ENCODE measurements at regions of chr17 and their contacts with region 1.

Region 1: GRCh38 chr17:79517827-79518584 is 92.8 kb downstream of the RBFOX3 start:
- DNase-seq: no peak
- ATAC-seq: no peak
- H3K4me3 ChIP-seq: no peak overlapping the region
- H3K27ac ChIP-seq: no peak overlapping the region
- H3K4me1 ChIP-seq: no peaks in the 10 kb centered on the region
- H3K27me3 ChIP-seq: peaks cover 33 to 87% of the 10 kb centered on the region in 2 experiments
- CTCF ChIP-seq: no peak
- EP300 ChIP-seq: no peak
- POLR2A ChIP-seq: no peak
- RAD21 ChIP-seq: no peak

Region 2: DNA sequence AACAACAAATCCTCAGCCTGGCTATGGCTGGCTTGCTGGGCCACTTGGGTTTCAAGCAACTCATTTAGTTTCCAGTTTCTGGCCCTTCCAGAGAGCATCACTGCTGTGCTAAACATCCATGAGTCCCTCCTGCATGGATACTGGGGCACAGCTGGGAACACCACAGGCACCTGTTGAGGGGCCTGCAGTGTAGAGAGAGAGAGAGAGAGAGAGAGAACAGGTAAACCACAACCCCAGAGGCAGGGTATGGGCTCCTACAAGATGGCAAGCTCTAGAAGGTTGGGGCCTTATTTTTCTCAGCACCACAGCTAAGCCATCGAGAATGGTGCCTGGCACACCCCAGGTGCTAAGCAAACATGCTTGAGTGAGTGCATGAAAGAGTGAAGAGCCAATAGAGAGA is 27.5 kb before region 1 on chr17:
- CTCF ChIA-PET with region 1: no interaction called
- POLR2A ChIA-PET with region 1: no interaction called
- in situ Hi-C with region 1: no loop called
- intact Hi-C with region 1: loop called (anchors 2 kb)
- DNase-seq: no peak
- ATAC-seq: no peak
- H3K4me3 ChIP-seq: no peak overlapping the region
- H3K27ac ChIP-seq: no peak overlapping the region
- H3K4me1 ChIP-seq: peaks cover 8% of the 10 kb centered on the region
- H3K27me3 ChIP-seq: peaks cover 6 to 46% of the 10 kb centered on the region in 2 experiments
- CTCF ChIP-seq: no peak
- EP300 ChIP-seq: no peak
- POLR2A ChIP-seq: no peak
- RAD21 ChIP-seq: no peak